ENCODE measurements at regions of chr20 and their contacts with region 1.

Region 1: DNA sequence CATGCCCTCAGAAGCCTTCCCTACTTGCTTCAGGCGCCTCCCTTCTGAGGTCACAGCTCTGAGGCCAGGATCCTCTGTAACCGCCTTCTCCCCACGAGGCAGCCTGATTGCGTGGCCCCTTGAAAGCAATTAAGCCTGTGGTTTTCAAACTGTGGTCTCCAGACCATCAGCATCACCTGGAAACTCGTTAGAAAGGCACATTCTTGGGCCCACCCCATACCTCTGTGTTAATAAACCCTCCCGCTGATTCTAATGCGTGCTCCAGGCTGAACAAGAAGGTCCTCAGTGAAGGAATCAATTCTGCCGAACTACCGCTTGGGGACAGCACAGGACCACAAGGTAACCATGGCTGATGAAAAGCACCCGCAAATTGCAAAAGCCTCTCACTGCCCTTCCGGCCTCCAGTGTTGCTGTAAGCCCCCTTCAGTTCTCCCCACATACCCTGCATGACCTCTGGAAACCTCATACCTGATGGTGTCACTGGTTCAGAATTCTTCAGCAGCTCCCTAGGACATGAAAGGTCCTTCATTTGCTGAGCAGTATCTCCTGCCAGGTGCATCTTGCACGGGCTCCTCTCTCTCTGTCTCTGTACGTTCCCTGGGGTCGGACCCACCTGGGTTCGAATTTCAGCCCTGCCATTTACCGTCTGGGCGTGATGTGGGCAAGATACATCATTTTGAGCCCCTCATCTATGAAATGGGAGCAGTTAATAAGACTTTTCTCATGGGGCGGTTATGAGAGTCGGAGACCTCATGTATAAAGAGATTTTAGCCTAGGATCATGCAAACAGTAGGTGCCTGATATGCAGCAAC is 93.3 kb upstream of the RNF24 start:
- DNase-seq: peak in 1 of 2 donors; percentile 83
- H3K4me3 ChIP-seq: no peak overlapping the region
- H3K27ac ChIP-seq: no peak overlapping the region
- H3K4me1 ChIP-seq: peaks cover 0 to 3% of the 10 kb centered on the region in 2 donors
- H3K27me3 ChIP-seq: no peaks in the 10 kb centered on the region
- CTCF ChIP-seq: peak; percentile 93 to 97 (median 96)

Region 2: GRCh38 chr20:4592316-4593148 is 483.8 kb after region 1 on chr20:
- intact Hi-C with region 1: loop called (anchors 5 kb)
- DNase-seq: peak in 1 of 2 donors; percentile 72
- H3K4me3 ChIP-seq: peak overlapping the region; percentile 49 to 53
- H3K27ac ChIP-seq: peak overlapping the region in 1 of 2 donors; percentile 69
- H3K4me1 ChIP-seq: peaks cover 6 to 10% of the 10 kb centered on the region in 2 donors
- H3K27me3 ChIP-seq: no peaks in the 10 kb centered on the region
- CTCF ChIP-seq: peak; percentile 90 to 93 (median 92)

Region 3: GRCh38 chr20:4626228-4626627 is 517.5 kb after region 1 on chr20:
- intact Hi-C with region 1: no loop called
- DNase-seq: no peak
- H3K4me3 ChIP-seq: no peak overlapping the region
- H3K27ac ChIP-seq: no peak overlapping the region
- H3K4me1 ChIP-seq: no peaks in the 10 kb centered on the region
- H3K27me3 ChIP-seq: no peaks in the 10 kb centered on the region
- CTCF ChIP-seq: no peak

Measured in ascending aorta (tissue), 2 donors.